ENCODE measurements at regions of chr11 and their contacts with region 1.

Region 1: GRCh38 chr11:134592391-134592990 is 180.4 kb upstream of the B3GAT1 start:
- DNase-seq: peak; percentile 84
- ATAC-seq: peak; percentile 79
- H3K4me3 Mint-ChIP-seq: no peak overlapping the region
- H3K27ac Mint-ChIP-seq: no peak overlapping the region
- H3K4me1 Mint-ChIP-seq: no peaks in the 10 kb centered on the region
- H3K27me3 Mint-ChIP-seq: peaks cover 4% of the 10 kb centered on the region

Region 2: DNA sequence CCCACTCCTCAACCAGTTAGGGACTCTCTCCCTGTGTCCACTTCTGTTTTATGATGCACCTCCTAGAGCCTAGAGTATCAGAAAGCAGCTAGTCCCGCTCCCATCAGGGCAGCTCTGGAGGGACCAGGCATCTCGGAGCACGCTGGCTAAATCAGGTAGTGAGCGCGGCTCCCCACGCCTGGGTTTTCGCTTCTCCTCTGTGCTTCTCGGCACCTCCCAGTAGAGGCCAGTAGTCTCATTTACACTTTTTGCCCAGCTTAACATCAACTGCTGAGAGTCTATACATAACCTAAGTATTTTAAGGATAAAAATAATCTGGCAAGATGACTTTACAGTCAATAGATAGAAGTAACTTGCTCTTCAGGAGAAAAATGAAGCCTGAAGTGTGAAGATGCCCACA is 1534.0 kb before region 1 on chr11:
- CTCF ChIA-PET with region 1: no interaction called
- POLR2A ChIA-PET with region 1: no interaction called
- intact Hi-C with region 1: no loop called
- DNase-seq: no peak
- ATAC-seq: no peak
- H3K4me3 Mint-ChIP-seq: no peak overlapping the region
- H3K27ac Mint-ChIP-seq: no peak overlapping the region
- H3K4me1 Mint-ChIP-seq: no peaks in the 10 kb centered on the region
- H3K27me3 Mint-ChIP-seq: peaks cover 15% of the 10 kb centered on the region

Region 3: DNA sequence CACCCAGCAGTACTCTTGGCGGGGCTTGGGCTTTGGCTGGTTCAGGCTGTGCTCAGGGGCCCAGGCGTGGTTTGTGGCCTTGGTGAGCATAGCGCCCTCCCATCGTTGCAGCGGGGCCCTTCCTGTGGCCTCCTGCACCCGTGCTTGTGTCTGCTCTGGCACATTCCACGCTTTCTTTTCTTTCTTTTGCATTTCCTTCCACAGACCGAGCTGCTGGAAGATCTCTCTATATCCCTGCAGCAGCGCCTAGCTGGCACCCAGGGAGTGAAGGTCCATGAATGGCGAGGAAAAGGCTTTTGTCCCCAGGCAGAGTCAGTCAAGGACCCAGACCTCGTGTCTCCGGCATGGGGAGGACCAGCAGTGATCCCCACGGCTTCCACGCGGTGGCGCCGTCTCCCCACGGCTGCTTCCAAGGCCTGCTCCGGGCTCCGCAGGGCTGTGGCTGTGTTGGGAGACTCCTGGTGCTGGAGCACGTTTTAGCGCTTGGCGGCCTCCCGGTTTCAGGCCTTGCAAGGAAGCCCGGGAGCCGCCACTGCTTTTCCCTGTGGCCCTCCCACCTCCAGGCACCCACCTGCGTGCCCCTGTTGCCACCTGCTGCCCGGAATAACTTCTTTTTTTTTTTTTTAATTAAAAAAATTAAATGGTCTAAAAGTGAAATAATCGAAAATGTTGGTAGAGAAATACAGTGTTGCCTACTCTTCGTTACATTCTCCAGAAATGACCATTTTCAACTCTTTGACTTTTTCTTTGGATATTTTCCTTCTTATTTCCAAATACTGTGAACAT is 232.2 kb before region 1 on chr11:
- CTCF ChIA-PET with region 1: interaction called, 3 read pairs
- POLR2A ChIA-PET with region 1: no interaction called
- intact Hi-C with region 1: loop called (anchors 1 to 5 kb)
- DNase-seq: peak; percentile 90
- ATAC-seq: peak; percentile 98
- H3K4me3 Mint-ChIP-seq: no peak overlapping the region
- H3K27ac Mint-ChIP-seq: no peak overlapping the region
- H3K4me1 Mint-ChIP-seq: peaks cover 12% of the 10 kb centered on the region
- H3K27me3 Mint-ChIP-seq: peaks cover 5% of the 10 kb centered on the region

Measured in activated CD4-positive, alpha-beta T cell treated with anti-CD3 and anti-CD28 coated beads for 36 hours (primary cell).